PC-3 (cell line): ENCODE measurements at regions of chr7 and their contacts with region 1.

Region 1: DNA sequence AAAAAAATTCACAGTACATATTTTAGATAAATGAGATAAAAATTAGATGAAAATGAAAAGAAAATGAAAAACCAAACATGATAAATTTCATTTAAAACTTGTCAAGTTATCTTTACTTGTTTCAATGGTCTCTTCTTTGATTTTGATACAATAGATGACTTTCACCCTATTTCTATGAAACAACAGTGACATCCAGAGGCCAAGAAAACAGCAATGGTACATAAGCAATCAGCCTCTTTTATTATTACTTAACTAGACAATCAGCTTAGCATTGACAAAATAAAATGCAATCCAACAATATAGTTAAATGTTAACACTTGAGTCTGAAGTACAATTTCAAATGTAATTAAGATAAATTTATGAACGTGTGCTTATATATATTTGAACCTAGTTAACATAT is 74.8 kb upstream of the GPR37 start:
- DNase-seq: peak; percentile 47
- ATAC-seq: peak; percentile 54
- H3K4me3 ChIP-seq: no peak overlapping the region
- H3K27ac ChIP-seq: no peak overlapping the region
- H3K4me1 ChIP-seq: no peaks in the 10 kb centered on the region
- H3K27me3 ChIP-seq: no peaks in the 10 kb centered on the region
- CTCF ChIP-seq: peak; percentile 72

Region 2: DNA sequence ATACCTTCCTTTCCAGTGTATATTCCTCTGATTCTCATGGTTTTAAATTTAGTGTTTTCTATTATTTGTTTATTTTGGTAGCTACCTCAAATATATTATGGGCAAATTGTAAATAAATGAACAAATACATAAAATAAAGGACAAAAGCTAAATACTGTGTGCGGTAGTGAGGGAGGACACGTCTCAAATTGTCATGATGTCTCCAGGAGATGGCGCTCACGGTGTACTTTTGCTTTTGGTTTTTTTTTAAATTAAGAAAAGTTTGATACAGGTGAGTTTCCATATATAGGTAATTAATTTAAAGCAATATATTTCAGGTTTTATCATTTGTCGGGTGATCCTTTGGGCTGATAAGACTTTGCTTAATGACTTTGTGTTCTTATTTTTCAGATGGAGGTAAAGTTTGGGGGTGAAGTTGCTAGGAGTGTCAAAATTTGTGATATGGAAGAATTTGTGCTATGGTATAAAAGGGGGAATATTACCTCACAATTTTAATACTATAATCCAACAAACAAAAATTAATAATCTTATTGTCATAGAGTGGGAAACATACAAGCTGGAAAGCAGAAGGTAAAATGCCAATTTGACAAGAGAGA is 739.2 kb before region 1 on chr7:
- CTCF ChIA-PET with region 1: no interaction called
- POLR2A ChIA-PET with region 1: no interaction called
- intact Hi-C with region 1: loop called (anchors 5 kb)
- DNase-seq: peak; percentile 52
- ATAC-seq: peak; percentile 31; the same call in 1 of the 2 replicates
- H3K4me3 ChIP-seq: no peak overlapping the region
- H3K27ac ChIP-seq: no peak overlapping the region
- H3K4me1 ChIP-seq: no peaks in the 10 kb centered on the region
- H3K27me3 ChIP-seq: no peaks in the 10 kb centered on the region
- CTCF ChIP-seq: peak; percentile 79

Region 3: GRCh38 chr7:124784879-124785818 is 55.3 kb before region 1 on chr7:
- CTCF ChIA-PET with region 1: no interaction called
- POLR2A ChIA-PET with region 1: no interaction called
- intact Hi-C with region 1: loop called (anchors 5 kb)
- DNase-seq: peak; percentile 66
- ATAC-seq: peak; percentile 38
- H3K4me3 ChIP-seq: no peak overlapping the region
- H3K27ac ChIP-seq: no peak overlapping the region
- H3K4me1 ChIP-seq: peaks cover 8% of the 10 kb centered on the region; the same call in 1 of the 2 replicates
- H3K27me3 ChIP-seq: no peaks in the 10 kb centered on the region
- CTCF ChIP-seq: peak; percentile 92

Region 4: GRCh38 chr7:124796769-124797168 is 43.7 kb before region 1 on chr7:
- CTCF ChIA-PET with region 1: no interaction called
- POLR2A ChIA-PET with region 1: no interaction called
- intact Hi-C with region 1: loop called (anchors 2 kb)
- DNase-seq: peak; percentile 78
- ATAC-seq: peak; percentile 88
- H3K4me3 ChIP-seq: peak overlapping the region; percentile 19; the same call in 1 of the 2 replicates
- H3K27ac ChIP-seq: peak overlapping the region; percentile 23; the same call in 1 of the 2 replicates
- H3K4me1 ChIP-seq: peaks cover 25% of the 10 kb centered on the region
- H3K27me3 ChIP-seq: no peaks in the 10 kb centered on the region
- CTCF ChIP-seq: no peak